A549 (cell line): ENCODE measurements at regions of chr3 and their contacts with region 1.

Region 1: DNA sequence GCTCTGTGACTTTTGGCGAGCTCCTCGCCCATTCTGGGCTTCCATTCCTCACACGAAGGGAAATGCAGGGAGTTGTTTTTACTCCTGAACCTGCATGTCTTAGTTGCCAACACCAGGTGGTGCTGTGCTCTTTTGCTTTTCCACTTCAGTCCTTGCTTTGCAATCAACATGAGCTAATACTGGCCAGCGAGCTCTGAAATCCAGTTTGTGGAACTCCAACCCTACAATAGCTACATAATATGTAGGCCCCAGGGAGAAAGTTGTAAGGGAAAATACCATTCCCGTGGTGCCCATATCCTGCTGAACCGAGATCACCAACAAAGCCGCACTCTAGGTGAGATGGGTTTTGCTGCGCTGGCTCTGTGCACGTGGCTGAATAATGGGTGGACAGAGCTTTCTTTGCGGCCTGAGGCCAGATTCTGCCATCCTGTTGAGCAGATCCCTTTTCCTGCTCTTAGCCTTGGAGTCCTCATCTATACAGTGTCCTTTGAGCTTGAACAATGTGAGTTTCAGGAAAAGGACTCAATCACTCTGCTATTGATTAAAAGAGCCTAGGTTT is 25.0 kb downstream of the LSM3 start:
- DNase-seq: peak; percentile 79
- ATAC-seq: peak; percentile 84 to 92
- H3K4me3 ChIP-seq: no peak overlapping the region
- H3K27ac ChIP-seq: no peak overlapping the region
- H3K4me1 ChIP-seq: no peaks in the 10 kb centered on the region
- CTCF ChIP-seq: peak; percentile 86
- EP300 ChIP-seq: no peak
- POLR2A ChIP-seq: no peak
- RAD21 ChIP-seq: peak; percentile 83 to 86

Region 2: DNA sequence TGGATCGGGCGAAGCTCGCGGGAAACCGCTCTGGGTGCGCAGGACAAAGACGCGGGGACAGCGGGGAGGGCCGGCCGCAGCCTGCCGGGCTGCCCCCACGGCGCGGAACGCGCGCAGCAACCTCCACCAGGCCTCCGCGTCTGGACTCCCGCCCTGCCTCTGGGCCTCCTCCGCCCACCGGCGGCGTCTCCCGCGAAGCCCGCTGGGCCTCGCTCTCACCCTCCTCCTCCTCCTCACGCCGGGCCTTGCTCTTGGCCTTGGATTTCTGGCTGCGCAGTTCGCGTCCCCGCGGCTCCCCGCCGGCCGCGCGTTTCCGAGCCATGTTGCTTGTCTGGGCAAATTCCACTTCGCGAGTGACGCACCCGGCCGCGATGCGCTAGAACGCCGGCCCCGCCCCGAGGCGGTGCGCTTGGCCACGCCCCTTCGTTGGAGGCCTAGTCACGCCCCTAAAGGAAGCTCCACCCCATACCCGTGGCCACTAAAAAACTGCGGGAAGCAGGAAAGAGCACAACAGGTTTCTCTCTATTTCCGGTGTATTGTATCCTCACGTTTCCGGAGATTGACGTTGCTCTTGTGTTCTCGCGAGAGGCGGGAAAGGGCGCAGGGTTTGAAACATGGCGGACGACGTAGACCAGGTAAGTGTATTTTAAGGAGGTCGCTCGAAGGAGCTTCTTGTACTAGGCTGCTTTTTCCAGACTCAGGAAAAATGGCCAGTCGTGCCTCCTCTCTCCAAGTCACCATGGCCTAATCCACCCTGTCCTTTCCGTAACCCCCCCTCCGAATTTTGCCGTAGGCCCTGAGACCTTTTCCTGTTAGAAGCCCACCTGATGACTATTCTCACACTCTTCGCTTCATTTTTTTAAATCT is 25.1 kb before region 1 on chr3 and contains the starts of genes LSM3 and XPC:
- CTCF ChIA-PET with region 1: interaction called, 20 read pairs
- POLR2A ChIA-PET with region 1: interaction called, 11 read pairs
- DNase-seq: peak; percentile 90 to 99
- ATAC-seq: peak; percentile 94 to 98
- H3K4me3 ChIP-seq: peak within 1 kb of the TSS; percentile 71
- H3K27ac ChIP-seq: peak within 1 kb of the TSS; percentile 95 to 97
- H3K4me1 ChIP-seq: peaks cover 41% of the 10 kb centered on the region
- CTCF ChIP-seq: no peak
- EP300 ChIP-seq: no peak
- POLR2A ChIP-seq: peak; percentile 87
- RAD21 ChIP-seq: peak in 1 of 2 experiments; percentile 23; a peak in 1 of 5 replicates
- polyA plus RNA-seq, gene LSM3: 11.8 and 23.9 TPM in 2 replicates
- polyA plus RNA-seq, gene XPC: 36.3 and 58.9 TPM in 2 replicates

Region 3: DNA sequence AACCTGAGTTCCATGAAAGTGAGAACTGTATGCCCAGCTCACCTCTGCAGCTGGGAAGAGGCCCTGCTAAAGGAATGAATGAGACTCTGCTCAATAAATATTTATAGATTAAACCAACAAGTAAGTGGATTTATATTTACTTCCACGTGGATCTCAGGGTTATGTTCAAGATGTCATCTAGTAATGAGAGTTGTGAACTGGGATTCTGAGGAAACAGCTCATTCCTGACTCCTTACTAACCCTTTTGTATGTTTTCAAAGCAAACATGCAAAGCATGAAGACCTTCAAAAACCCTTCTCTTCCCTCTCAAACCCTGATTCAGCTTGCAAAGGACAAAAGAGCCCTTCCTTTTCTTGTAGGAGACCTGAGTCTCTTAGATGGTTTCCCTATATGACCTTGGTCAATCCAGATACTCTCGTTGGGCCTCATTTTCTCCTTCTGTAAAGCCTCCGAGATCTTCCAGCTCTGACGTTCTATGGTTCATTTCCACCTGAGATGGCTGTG is 28.4 kb after region 1 on chr3:
- CTCF ChIA-PET with region 1: interaction called, 13 read pairs
- POLR2A ChIA-PET with region 1: no interaction called
- DNase-seq: no peak
- ATAC-seq: no peak
- H3K4me3 ChIP-seq: no peak overlapping the region
- H3K27ac ChIP-seq: no peak overlapping the region
- H3K4me1 ChIP-seq: peaks cover 5% of the 10 kb centered on the region; the same call in 2 of the 3 replicates
- CTCF ChIP-seq: no peak
- EP300 ChIP-seq: no peak
- POLR2A ChIP-seq: no peak
- RAD21 ChIP-seq: no peak

Region 4: GRCh38 chr3:14266361-14266760 is 62.8 kb after region 1 on chr3:
- CTCF ChIA-PET with region 1: interaction called, 18 read pairs
- POLR2A ChIA-PET with region 1: no interaction called
- DNase-seq: no peak
- ATAC-seq: no peak
- H3K4me3 ChIP-seq: no peak overlapping the region
- H3K27ac ChIP-seq: no peak overlapping the region
- H3K4me1 ChIP-seq: peaks cover 16% of the 10 kb centered on the region
- CTCF ChIP-seq: no peak
- EP300 ChIP-seq: no peak
- POLR2A ChIP-seq: no peak
- RAD21 ChIP-seq: no peak

Region 5: GRCh38 chr3:14467814-14468620 is 264.4 kb after region 1 on chr3:
- CTCF ChIA-PET with region 1: interaction called, 64 read pairs
- POLR2A ChIA-PET with region 1: no interaction called
- DNase-seq: peak; percentile 51 to 91
- ATAC-seq: peak; percentile 51 to 68; a peak in 5 of 6 replicates
- H3K4me3 ChIP-seq: no peak overlapping the region
- H3K27ac ChIP-seq: no peak overlapping the region
- H3K4me1 ChIP-seq: peaks cover 24% of the 10 kb centered on the region
- CTCF ChIP-seq: peak; percentile 74
- EP300 ChIP-seq: no peak
- POLR2A ChIP-seq: no peak
- RAD21 ChIP-seq: peak; percentile 85 to 88